ENCODE measurements at regions of chr5 and their contacts with region 1.

Region 1: GRCh38 chr5:142324871-142325724 is at the start of gene SPRY4:
- DNase-seq: peak; percentile 94
- ATAC-seq: peak; percentile 74
- total RNA-seq, gene SPRY4: 9.7 TPM

Region 2: GRCh38 chr5:142356716-142357473 is 31.8 kb after region 1 on chr5:
- intact Hi-C with region 1: loop called (anchors 1 kb)
- DNase-seq: peak; percentile 94
- ATAC-seq: peak; percentile 86

Region 3: DNA sequence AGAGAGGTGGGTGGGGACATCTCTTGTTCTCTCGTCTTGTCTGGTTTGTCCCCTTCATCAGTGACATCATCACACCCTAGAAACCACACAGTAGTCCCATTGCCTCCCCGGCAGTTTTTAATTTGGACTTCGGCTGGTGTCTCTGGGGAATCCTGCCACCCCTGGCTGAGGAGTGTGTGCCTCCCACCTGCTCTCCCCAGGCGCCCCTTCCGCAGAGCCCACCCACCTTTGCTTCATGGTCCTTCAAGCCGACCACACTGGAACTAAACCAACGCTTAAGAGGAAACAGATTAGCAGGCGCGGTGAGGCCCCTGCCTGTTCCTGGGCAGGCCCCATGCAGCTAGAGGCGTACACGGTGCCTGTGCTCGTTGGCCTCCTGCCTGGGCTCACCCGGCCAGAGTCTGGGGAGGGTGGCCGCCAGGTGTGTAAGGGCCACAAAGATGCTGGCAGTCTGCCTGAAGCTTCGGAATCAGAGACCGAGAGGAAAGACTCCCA is 107.3 kb after region 1 on chr5:
- intact Hi-C with region 1: loop called (anchors 5 kb)
- DNase-seq: no peak
- ATAC-seq: no peak

Region 4: GRCh38 chr5:142492781-142493281 is 167.7 kb after region 1 on chr5:
- intact Hi-C with region 1: loop called (anchors 5 kb)
- DNase-seq: no peak
- ATAC-seq: peak; percentile 48